SK-N-SH (cell line): ENCODE measurements at regions of chr12 and their contacts with region 1.

Region 1: DNA sequence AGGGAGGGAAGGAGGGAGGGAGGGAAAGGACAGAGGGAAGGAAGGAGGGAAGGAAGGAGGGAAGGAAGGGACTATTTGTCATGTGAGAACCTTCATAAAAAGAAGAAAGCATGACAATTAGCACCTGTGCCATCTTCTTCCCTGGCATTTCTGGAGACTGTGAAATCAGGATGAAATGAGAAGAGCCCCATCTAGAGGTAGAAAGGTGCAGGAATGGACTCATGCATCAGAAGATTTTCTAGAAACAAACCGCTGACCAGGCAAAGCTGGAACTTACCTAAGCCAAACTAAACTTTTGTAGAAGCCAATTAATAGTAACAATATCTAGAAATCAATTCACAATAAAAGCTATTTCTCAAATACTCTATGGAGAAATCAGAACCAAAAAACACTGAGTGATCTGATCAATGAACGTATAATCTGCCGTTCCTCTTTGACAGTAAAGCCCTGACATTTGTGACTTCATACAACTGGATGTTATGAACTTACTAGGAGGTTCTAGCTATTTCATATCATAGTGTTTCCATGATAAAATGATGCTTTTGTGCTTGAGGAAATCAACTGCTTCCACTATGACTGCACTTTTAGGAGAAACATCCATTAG is 24.4 kb upstream of the CRACR2A start:
- DNase-seq: peak; percentile 61
- H3K4me3 ChIP-seq: no peak overlapping the region
- H3K27ac ChIP-seq: no peak overlapping the region
- H3K4me1 ChIP-seq: no peaks in the 10 kb centered on the region
- H3K27me3 ChIP-seq: peaks cover 12% of the 10 kb centered on the region; the same call in 1 of the 2 replicates
- CTCF ChIP-seq: peak; percentile 81
- EP300 ChIP-seq: no peak
- RAD21 ChIP-seq: peak; percentile 85

Region 2: DNA sequence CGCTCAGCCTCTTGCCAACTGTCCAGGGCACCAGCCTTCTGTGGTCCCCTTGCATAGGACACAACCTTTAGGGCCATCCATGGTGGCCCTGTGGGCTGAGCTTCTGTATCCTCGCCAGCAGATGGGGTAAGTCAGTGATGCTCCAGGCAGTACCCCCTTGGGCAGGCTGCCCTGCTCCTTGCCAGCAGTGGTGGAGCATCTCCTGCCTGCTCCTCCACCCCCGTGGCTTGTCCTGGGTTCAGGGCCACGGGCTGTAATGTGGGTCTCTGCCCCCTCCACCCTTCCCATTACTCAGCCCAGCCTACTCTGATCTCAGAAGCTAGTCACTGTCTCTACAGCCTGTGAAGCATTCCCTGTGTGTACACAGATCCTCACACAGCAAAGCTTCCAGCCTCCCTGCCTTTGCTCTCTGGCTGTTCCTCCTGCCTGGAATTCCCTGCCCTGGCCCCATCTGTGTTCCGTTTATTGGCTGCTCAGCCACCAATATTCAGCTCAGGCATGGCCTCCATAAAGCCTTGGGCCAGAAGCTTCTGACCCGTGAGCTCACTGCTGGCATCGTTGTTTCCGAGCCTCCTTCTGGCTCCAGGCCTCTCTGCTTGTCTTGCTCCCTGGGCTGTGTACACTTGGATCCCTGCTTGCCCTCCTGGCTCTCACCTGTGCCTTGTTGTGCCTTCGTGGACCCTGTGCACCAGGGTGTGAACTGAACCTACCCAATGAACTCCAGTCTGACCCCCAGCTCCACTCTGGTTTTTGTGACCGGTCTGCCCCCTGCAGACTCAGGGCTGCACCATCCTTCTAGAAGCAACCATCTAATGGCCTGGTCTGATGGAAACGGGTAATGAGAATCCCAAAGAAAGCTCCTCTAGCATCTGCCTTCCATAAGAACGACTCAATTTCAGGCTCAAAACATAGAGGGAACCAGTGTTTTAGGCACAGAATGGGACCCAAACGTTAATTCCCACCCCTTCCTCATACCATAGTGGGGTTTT is 463.3 kb before region 1 on chr12:
- CTCF ChIA-PET with region 1: interaction called, 20 read pairs
- POLR2A ChIA-PET with region 1: no interaction called
- DNase-seq: peak; percentile 64
- H3K4me3 ChIP-seq: no peak overlapping the region
- H3K27ac ChIP-seq: no peak overlapping the region
- H3K4me1 ChIP-seq: peaks cover 0 to 25% of the 10 kb centered on the region in 2 experiments; a peak in 2 of 4 replicates
- H3K27me3 ChIP-seq: peaks cover 9% of the 10 kb centered on the region; the same call in 1 of the 2 replicates
- CTCF ChIP-seq: peak; percentile 45
- EP300 ChIP-seq: no peak
- RAD21 ChIP-seq: peak; percentile 52

Region 3: GRCh38 chr12:3622021-3622821 is 155.1 kb before region 1 on chr12:
- CTCF ChIA-PET with region 1: interaction called, 11 read pairs
- POLR2A ChIA-PET with region 1: no interaction called
- DNase-seq: no peak
- H3K4me3 ChIP-seq: no peak overlapping the region
- H3K27ac ChIP-seq: no peak overlapping the region
- H3K4me1 ChIP-seq: peaks cover 0 to 4% of the 10 kb centered on the region in 2 experiments; a peak in 1 of 4 replicates
- H3K27me3 ChIP-seq: no peaks in the 10 kb centered on the region; the same call in 1 of the 2 replicates
- CTCF ChIP-seq: no peak
- EP300 ChIP-seq: no peak
- RAD21 ChIP-seq: no peak

Region 4: DNA sequence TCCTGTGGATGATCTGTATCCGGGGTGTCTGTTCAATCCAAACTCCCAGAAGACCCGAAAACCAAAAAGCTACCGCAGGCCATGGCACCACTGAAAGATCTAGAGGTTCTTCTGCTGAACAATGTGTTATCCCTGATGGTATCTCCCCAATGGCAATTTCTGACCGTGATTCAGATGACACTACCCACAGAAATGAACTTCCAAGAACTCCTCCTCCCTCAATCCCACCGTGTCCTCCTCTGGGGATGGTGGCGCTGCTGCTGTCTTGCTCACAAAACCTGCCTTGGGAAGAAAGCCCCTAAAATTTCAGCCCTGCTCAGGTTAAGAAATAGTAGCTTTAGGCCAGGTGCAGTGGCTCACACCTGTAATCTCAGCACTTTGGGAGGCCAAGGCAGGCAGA is 32.2 kb before region 1 on chr12:
- CTCF ChIA-PET with region 1: interaction called, 10 read pairs
- POLR2A ChIA-PET with region 1: no interaction called
- DNase-seq: no peak
- H3K4me3 ChIP-seq: no peak overlapping the region
- H3K27ac ChIP-seq: no peak overlapping the region
- H3K4me1 ChIP-seq: no peaks in the 10 kb centered on the region
- H3K27me3 ChIP-seq: no peaks in the 10 kb centered on the region; the same call in 1 of the 2 replicates
- CTCF ChIP-seq: no peak
- EP300 ChIP-seq: no peak
- RAD21 ChIP-seq: no peak

Region 5: GRCh38 chr12:3791256-3792252 is 14.2 kb after region 1 on chr12:
- CTCF ChIA-PET with region 1: interaction called, 15 read pairs
- POLR2A ChIA-PET with region 1: no interaction called
- DNase-seq: no peak
- H3K4me3 ChIP-seq: no peak overlapping the region
- H3K27ac ChIP-seq: no peak overlapping the region
- H3K4me1 ChIP-seq: no peaks in the 10 kb centered on the region
- H3K27me3 ChIP-seq: no peaks in the 10 kb centered on the region
- CTCF ChIP-seq: no peak
- EP300 ChIP-seq: no peak
- RAD21 ChIP-seq: no peak

Region 6: GRCh38 chr12:3803865-3804472 is 26.7 kb after region 1 on chr12:
- CTCF ChIA-PET with region 1: interaction called, 20 read pairs
- POLR2A ChIA-PET with region 1: no interaction called
- DNase-seq: peak; percentile 52
- H3K4me3 ChIP-seq: no peak overlapping the region; a peak in 1 of 4 replicates
- H3K27ac ChIP-seq: no peak overlapping the region
- H3K4me1 ChIP-seq: peaks cover 0 to 8% of the 10 kb centered on the region in 2 experiments; a peak in 1 of 4 replicates
- H3K27me3 ChIP-seq: no peaks in the 10 kb centered on the region
- CTCF ChIP-seq: peak; percentile 96
- EP300 ChIP-seq: no peak
- RAD21 ChIP-seq: peak; percentile 89